ENCODE measurements at regions of chr2 and their contacts with region 1.

Region 1: DNA sequence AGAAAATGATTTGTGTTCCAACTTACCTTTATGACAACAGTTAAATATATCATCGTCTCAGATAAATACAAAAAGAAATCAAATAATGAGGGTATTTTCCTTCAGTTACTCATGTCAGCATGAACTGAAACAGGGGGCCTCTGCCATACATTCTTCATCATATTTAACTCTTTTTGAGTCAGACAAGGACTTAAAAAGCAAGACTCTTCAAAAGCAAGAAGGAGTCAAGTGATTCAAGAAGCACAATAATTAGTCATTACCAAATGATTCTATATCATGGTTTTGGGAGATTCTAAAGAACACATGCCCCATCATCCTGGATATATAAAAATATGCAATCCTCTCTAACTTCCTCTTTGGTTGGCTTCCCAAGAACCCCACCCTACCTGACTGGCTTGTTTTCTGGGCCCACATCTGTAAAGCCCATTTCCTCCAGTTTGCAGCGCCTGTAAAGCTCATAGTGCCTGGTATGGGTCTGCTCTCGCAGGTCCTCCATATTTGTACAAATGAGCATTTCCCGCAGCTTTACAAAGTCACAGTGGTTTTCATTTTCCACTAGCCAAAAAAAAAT is 49.7 kb downstream of the SEPTIN10 start:
- DNase-seq: no peak
- H3K4me3 ChIP-seq: no peak overlapping the region
- H3K27ac ChIP-seq: peak overlapping the region; percentile 12
- H3K4me1 ChIP-seq: peaks cover 35% of the 10 kb centered on the region
- H3K27me3 ChIP-seq: no peaks in the 10 kb centered on the region
- CTCF ChIP-seq: no peak
- POLR2A ChIP-seq: no peak

Region 2: DNA sequence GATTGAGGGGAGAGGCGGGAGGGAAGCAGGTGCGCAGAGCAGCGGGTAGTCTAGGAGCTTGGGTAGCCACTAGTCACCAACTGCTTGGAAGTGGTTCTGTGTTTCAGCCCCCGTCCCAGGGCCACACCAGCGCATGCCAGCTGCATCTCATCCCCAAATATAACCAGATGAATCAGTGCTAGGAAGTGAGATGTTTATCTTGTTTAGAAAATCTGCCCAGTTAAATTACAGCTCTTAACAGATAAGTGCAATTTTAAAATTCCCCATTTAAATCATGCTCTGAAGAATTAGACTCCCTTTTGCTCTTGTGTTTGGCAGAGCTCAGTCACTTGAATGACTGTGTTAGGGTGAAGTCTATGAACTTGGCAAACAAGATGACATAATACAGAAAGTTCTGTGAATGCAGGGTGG is 144.1 kb before region 1 on chr2:
- CTCF ChIA-PET with region 1: no interaction called
- POLR2A ChIA-PET with region 1: no interaction called
- dilution Hi-C with region 1: no loop called
- intact Hi-C with region 1: no loop called
- DNase-seq: peak; percentile 43
- H3K4me3 ChIP-seq: no peak overlapping the region
- H3K27ac ChIP-seq: no peak overlapping the region
- H3K4me1 ChIP-seq: peaks cover 3% of the 10 kb centered on the region
- H3K27me3 ChIP-seq: no peaks in the 10 kb centered on the region
- CTCF ChIP-seq: no peak
- POLR2A ChIP-seq: no peak

Region 3: DNA sequence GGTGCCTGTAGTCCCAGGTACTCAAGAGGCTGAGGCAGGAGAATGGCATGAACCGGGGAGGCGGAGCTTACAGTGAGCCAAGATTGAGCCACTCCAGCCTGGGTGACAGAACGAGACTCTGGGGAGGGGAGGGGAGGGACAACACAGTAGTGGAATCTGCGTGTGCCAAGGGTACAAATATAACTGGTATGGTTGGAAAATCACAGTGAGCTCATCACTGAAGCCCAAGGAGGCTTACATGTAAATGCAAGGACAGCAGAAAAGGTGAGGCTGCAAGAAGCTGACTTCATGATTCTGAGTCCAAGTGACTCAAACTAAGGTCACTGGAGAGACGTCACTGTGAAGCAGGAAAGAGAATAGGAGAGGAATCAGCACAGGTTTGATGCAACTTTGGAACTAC is 40.5 kb after region 1 on chr2:
- CTCF ChIA-PET with region 1: no interaction called
- POLR2A ChIA-PET with region 1: interaction called, 8 read pairs
- dilution Hi-C with region 1: no loop called
- intact Hi-C with region 1: loop called (anchors 2 kb)
- DNase-seq: no peak
- H3K4me3 ChIP-seq: no peak overlapping the region
- H3K27ac ChIP-seq: no peak overlapping the region
- H3K4me1 ChIP-seq: peaks cover 33% of the 10 kb centered on the region
- H3K27me3 ChIP-seq: no peaks in the 10 kb centered on the region
- CTCF ChIP-seq: no peak
- POLR2A ChIP-seq: no peak

Region 4: GRCh38 chr2:109648041-109648527 is 84.0 kb after region 1 on chr2:
- CTCF ChIA-PET with region 1: no interaction called
- POLR2A ChIA-PET with region 1: no interaction called
- dilution Hi-C with region 1: no loop called
- intact Hi-C with region 1: no loop called
- DNase-seq: no peak
- H3K4me3 ChIP-seq: no peak overlapping the region
- H3K27ac ChIP-seq: no peak overlapping the region
- H3K4me1 ChIP-seq: no peaks in the 10 kb centered on the region
- H3K27me3 ChIP-seq: peaks cover 0 to 6% of the 10 kb centered on the region in 2 experiments
- CTCF ChIP-seq: no peak
- POLR2A ChIP-seq: no peak

Measured in endothelial cell of umbilical vein (primary cell).